ENCODE measurements at regions of chr1 and their contacts with region 1.

Region 1: GRCh38 chr1:231603598-231604275 is 22.9 kb upstream of the DISC1 start:
- DNase-seq: peak; percentile 34
- H3K4me3 Mint-ChIP-seq: peak overlapping the region; percentile 87
- H3K27ac Mint-ChIP-seq: peak overlapping the region; percentile 69
- H3K4me1 Mint-ChIP-seq: peaks cover 8% of the 10 kb centered on the region
- H3K27me3 Mint-ChIP-seq: peaks cover 27% of the 10 kb centered on the region

Region 2: GRCh38 chr1:231240883-231241735 is 362.6 kb before region 1 on chr1 and contains the start of gene GNPAT:
- intact Hi-C with region 1: loop called (anchors 5 kb)
- DNase-seq: peak; percentile 89
- H3K4me3 Mint-ChIP-seq: peak within 1 kb of the TSS; percentile 99
- H3K27ac Mint-ChIP-seq: peak within 1 kb of the TSS; percentile 96
- H3K4me1 Mint-ChIP-seq: peaks cover 44% of the 10 kb centered on the region
- H3K27me3 Mint-ChIP-seq: no peaks in the 10 kb centered on the region
- total RNA-seq, gene GNPAT: 46.9 and 50.9 TPM in 2 replicates

Region 3: GRCh38 chr1:231315887-231316286 is 287.9 kb before region 1 on chr1:
- intact Hi-C with region 1: loop called (anchors 5 kb)
- DNase-seq: no peak
- H3K4me3 Mint-ChIP-seq: no peak overlapping the region
- H3K27ac Mint-ChIP-seq: no peak overlapping the region
- H3K4me1 Mint-ChIP-seq: peaks cover 2% of the 10 kb centered on the region
- H3K27me3 Mint-ChIP-seq: no peaks in the 10 kb centered on the region

Region 4: GRCh38 chr1:231357831-231358354 is 245.8 kb before region 1 on chr1:
- intact Hi-C with region 1: loop called (anchors 1 kb)
- DNase-seq: no peak
- H3K4me3 Mint-ChIP-seq: no peak overlapping the region
- H3K27ac Mint-ChIP-seq: no peak overlapping the region
- H3K4me1 Mint-ChIP-seq: peaks cover 8% of the 10 kb centered on the region
- H3K27me3 Mint-ChIP-seq: no peaks in the 10 kb centered on the region

Region 5: GRCh38 chr1:231618609-231619256 is 15.0 kb after region 1 on chr1:
- intact Hi-C with region 1: no loop called
- DNase-seq: no peak
- H3K4me3 Mint-ChIP-seq: no peak overlapping the region
- H3K27ac Mint-ChIP-seq: no peak overlapping the region
- H3K4me1 Mint-ChIP-seq: peaks cover 12% of the 10 kb centered on the region
- H3K27me3 Mint-ChIP-seq: peaks cover 61% of the 10 kb centered on the region

Measured in activated T-helper 2 cell treated with anti-CD3 and anti-CD28 coated beads, Interferon-gamma antibody, Interleukin-2, Interleukin-4, amounts not matched to agents 10 μg/mL and 5 μg/mL and 100 μg/mL, durations not matched to agents 14 hours and 24 hours and 36 hours (primary cell).